CD8-positive, alpha-beta memory T cell (primary cell): ENCODE measurements at regions of chr16 and their contacts with region 1.

Region 1: GRCh38 chr16:69424053-69424934 is at the start of gene CYB5B:
- DNase-seq: peak; percentile 90 to 97 (median 95)
- H3K4me3 ChIP-seq: peak within 1 kb of the TSS; percentile 81
- H3K4me3 Mint-ChIP-seq: peak within 1 kb of the TSS; percentile 91 to 100 (median 96)
- H3K27ac ChIP-seq: peak within 1 kb of the TSS; percentile 71
- H3K27ac Mint-ChIP-seq: peak within 1 kb of the TSS; percentile 78 to 98 (median 95)
- H3K4me1 ChIP-seq: peaks cover 17% of the 10 kb centered on the region
- H3K4me1 Mint-ChIP-seq: peaks cover 28 to 50% (median 49%) of the 10 kb centered on the region in 3 donors
- H3K27me3 ChIP-seq: no peaks in the 10 kb centered on the region
- H3K27me3 Mint-ChIP-seq: no peaks in the 10 kb centered on the region
- total RNA-seq, gene CYB5B: 152 to 153 TPM

Region 2: GRCh38 chr16:68144008-68144407 is 1280.3 kb before region 1 on chr16:
- CTCF ChIA-PET with region 1: no interaction called
- POLR2A ChIA-PET with region 1: interaction called, 11 read pairs
- DNase-seq: no peak
- H3K4me3 ChIP-seq: no peak overlapping the region
- H3K4me3 Mint-ChIP-seq: no peak overlapping the region
- H3K27ac ChIP-seq: no peak overlapping the region
- H3K27ac Mint-ChIP-seq: peak overlapping the region in 4 of 8 donors; percentile 38 to 77 (median 47)
- H3K4me1 ChIP-seq: peaks cover 24% of the 10 kb centered on the region
- H3K4me1 Mint-ChIP-seq: peaks cover 58 to 75% (median 73%) of the 10 kb centered on the region in 3 donors
- H3K27me3 ChIP-seq: no peaks in the 10 kb centered on the region
- H3K27me3 Mint-ChIP-seq: no peaks in the 10 kb centered on the region